A673 (cell line): ENCODE measurements at regions of chr12 and their contacts with region 1.

Region 1: DNA sequence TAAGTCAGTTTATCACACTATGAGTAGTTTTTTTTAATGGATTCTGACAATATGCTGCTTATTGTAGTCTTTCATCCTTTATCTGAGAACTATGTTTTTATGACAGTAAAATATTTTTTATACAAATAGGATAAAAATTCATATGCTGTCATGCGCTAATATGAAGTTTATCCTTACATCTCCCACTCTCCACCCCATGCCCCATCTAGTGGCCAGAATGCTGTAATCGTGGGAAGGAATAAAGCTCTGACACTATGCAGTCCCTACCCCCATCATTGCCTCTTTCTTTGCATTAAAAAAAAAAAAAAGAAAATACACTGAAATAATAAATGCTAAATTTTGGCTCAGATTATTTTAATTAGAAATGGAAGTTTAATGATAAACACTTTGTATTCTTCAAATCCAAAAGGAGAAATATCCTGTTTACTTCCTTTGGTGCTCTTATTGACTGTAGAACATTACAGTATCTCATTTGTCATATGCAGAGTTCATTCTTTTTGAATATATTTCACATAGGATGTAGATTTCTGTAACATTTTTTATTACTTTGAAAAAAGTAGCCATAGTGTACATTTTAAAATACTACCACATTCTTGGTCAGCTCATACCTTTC is 145.9 kb upstream of the SLCO1C1 start:
- DNase-seq: peak; percentile 55
- H3K4me3 ChIP-seq: no peak overlapping the region
- H3K27ac ChIP-seq: no peak overlapping the region
- H3K4me1 ChIP-seq: no peaks in the 10 kb centered on the region
- H3K27me3 ChIP-seq: peaks cover 14% of the 10 kb centered on the region
- CTCF ChIP-seq: peak; percentile 73

Region 2: GRCh38 chr12:19915392-19916195 is 633.6 kb before region 1 on chr12:
- CTCF ChIA-PET with region 1: no interaction called
- POLR2A ChIA-PET with region 1: no interaction called
- intact Hi-C with region 1: no loop called
- DNase-seq: peak; percentile 31
- H3K4me3 ChIP-seq: no peak overlapping the region
- H3K27ac ChIP-seq: no peak overlapping the region
- H3K4me1 ChIP-seq: no peaks in the 10 kb centered on the region
- H3K27me3 ChIP-seq: no peaks in the 10 kb centered on the region
- CTCF ChIP-seq: peak; percentile 64

Region 3: GRCh38 chr12:20125276-20125798 is 423.9 kb before region 1 on chr12:
- CTCF ChIA-PET with region 1: no interaction called
- POLR2A ChIA-PET with region 1: no interaction called
- intact Hi-C with region 1: loop called (anchors 10 kb)
- DNase-seq: peak; percentile 70
- H3K4me3 ChIP-seq: no peak overlapping the region
- H3K27ac ChIP-seq: no peak overlapping the region
- H3K4me1 ChIP-seq: peaks cover 53% of the 10 kb centered on the region
- H3K27me3 ChIP-seq: no peaks in the 10 kb centered on the region
- CTCF ChIP-seq: no peak

Region 4: GRCh38 chr12:20264608-20265114 is 284.6 kb before region 1 on chr12:
- CTCF ChIA-PET with region 1: no interaction called
- POLR2A ChIA-PET with region 1: no interaction called
- intact Hi-C with region 1: no loop called
- DNase-seq: no peak
- H3K4me3 ChIP-seq: no peak overlapping the region
- H3K27ac ChIP-seq: no peak overlapping the region
- H3K4me1 ChIP-seq: peaks cover 13% of the 10 kb centered on the region
- H3K27me3 ChIP-seq: no peaks in the 10 kb centered on the region
- CTCF ChIP-seq: no peak

Region 5: GRCh38 chr12:20369305-20370005 is 179.8 kb before region 1 on chr12:
- CTCF ChIA-PET with region 1: interaction called, 12 read pairs
- POLR2A ChIA-PET with region 1: no interaction called
- intact Hi-C with region 1: no loop called
- DNase-seq: peak; percentile 49
- H3K4me3 ChIP-seq: peak overlapping the region; percentile 55
- H3K27ac ChIP-seq: no peak overlapping the region
- H3K4me1 ChIP-seq: peaks cover 4% of the 10 kb centered on the region
- H3K27me3 ChIP-seq: peaks cover 60% of the 10 kb centered on the region
- CTCF ChIP-seq: no peak

Region 6: GRCh38 chr12:20469756-20470155 is 79.5 kb before region 1 on chr12:
- CTCF ChIA-PET with region 1: no interaction called
- POLR2A ChIA-PET with region 1: no interaction called
- intact Hi-C with region 1: loop called (anchors 5 kb)
- DNase-seq: no peak
- H3K4me3 ChIP-seq: no peak overlapping the region
- H3K27ac ChIP-seq: no peak overlapping the region
- H3K4me1 ChIP-seq: no peaks in the 10 kb centered on the region
- H3K27me3 ChIP-seq: no peaks in the 10 kb centered on the region
- CTCF ChIP-seq: no peak